A549 (cell line): ENCODE measurements at regions of chr22 and their contacts with region 1.

Region 1: GRCh38 chr22:43993027-43993760 is 30.9 kb upstream of the PARVB start:
- DNase-seq: peak; percentile 43 to 45
- ATAC-seq: peak; percentile 83 to 92; a peak in 5 of 6 replicates
- H3K4me3 ChIP-seq: no peak overlapping the region
- H3K27ac ChIP-seq: no peak overlapping the region
- H3K4me1 ChIP-seq: no peaks in the 10 kb centered on the region
- CTCF ChIP-seq: peak; percentile 84
- EP300 ChIP-seq: no peak
- POLR2A ChIP-seq: no peak
- RAD21 ChIP-seq: peak; percentile 82 to 85

Region 2: GRCh38 chr22:43945632-43946383 is 47.4 kb before region 1 on chr22:
- CTCF ChIA-PET with region 1: no interaction called
- POLR2A ChIA-PET with region 1: no interaction called
- DNase-seq: peak; percentile 69 to 72
- ATAC-seq: peak; percentile 99 to 100
- H3K4me3 ChIP-seq: no peak overlapping the region
- H3K27ac ChIP-seq: no peak overlapping the region
- H3K4me1 ChIP-seq: no peaks in the 10 kb centered on the region
- CTCF ChIP-seq: peak; percentile 59
- EP300 ChIP-seq: no peak
- POLR2A ChIP-seq: no peak
- RAD21 ChIP-seq: peak; percentile 34 to 38; a peak in 4 of 5 replicates

Region 3: DNA sequence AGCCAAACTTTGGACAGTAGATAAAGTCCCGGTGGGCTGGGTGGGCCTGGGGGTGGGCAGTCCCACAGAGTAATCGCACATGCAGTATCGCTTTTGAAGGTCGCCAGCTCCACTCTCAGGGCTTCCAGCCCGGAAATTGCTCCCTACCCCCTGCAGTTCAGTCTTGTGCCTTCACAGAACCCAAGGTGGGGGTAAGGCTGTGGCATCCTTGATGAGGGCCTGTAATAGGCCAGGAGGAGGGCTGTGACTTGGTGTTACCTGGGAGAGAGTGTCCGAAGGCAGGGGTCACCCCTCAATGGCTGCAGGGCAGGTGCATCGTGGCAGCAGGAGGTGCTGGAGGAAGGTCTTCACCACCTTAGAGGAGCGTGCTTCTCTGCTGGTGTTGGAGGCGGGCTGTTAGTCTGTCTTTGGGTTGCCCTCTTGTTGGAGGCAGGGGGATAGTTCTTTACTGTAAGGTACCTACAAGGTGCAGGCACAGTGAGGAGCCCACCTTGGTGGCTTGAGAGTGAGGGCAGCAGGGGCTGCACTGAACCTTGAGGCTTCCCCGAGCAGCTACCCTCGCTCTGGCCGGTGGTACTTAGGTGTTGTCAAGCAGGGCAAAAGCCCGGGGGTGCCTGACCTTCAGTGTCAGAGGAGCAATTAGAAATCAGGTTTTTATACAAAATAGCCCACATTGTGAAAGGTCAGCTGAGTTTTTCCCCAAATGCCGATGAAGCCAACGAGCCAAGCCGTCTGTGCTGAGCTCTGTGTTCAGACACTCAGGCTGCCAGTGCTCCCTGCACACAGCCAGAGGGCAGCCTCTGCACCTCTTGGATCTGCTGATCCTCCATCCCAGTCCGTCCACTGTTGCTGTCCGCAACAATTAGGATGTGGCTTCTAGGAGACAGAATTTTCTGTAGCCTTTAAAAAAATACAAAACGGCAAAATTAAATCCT is 16.1 kb before region 1 on chr22:
- CTCF ChIA-PET with region 1: interaction called, 16 read pairs
- POLR2A ChIA-PET with region 1: no interaction called
- DNase-seq: no peak
- ATAC-seq: no peak
- H3K4me3 ChIP-seq: no peak overlapping the region
- H3K27ac ChIP-seq: no peak overlapping the region
- H3K4me1 ChIP-seq: no peaks in the 10 kb centered on the region
- CTCF ChIP-seq: no peak
- EP300 ChIP-seq: no peak
- POLR2A ChIP-seq: no peak
- RAD21 ChIP-seq: no peak

Region 4: DNA sequence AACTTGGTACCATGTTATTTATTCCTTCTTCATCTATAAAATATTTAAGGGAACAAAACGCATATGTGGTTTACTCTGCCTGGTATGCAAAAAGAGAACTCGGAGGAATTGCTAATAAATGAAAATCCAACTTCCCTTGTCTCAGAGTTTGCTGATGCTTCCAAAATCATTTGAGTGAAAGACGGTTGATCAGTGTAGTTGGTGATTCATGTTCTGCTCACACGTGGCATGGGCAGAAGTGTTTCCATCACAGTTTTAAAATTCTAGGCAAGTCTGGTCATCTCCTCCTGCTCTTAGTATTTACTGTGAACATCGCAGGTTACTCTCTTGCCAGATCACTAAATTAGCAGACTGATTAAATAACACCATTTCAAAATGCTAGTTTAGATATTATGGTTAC is 19.0 kb after region 1 on chr22:
- CTCF ChIA-PET with region 1: interaction called, 24 read pairs
- POLR2A ChIA-PET with region 1: no interaction called
- DNase-seq: no peak
- ATAC-seq: no peak
- H3K4me3 ChIP-seq: no peak overlapping the region
- H3K27ac ChIP-seq: no peak overlapping the region
- H3K4me1 ChIP-seq: no peaks in the 10 kb centered on the region
- CTCF ChIP-seq: no peak
- EP300 ChIP-seq: no peak
- POLR2A ChIP-seq: no peak
- RAD21 ChIP-seq: no peak

Region 5: GRCh38 chr22:44063462-44064371 is 70.5 kb after region 1 on chr22:
- CTCF ChIA-PET with region 1: interaction called, 10 read pairs
- POLR2A ChIA-PET with region 1: no interaction called
- DNase-seq: no peak
- ATAC-seq: no peak
- H3K4me3 ChIP-seq: no peak overlapping the region
- H3K27ac ChIP-seq: no peak overlapping the region
- H3K4me1 ChIP-seq: peaks cover 11% of the 10 kb centered on the region
- CTCF ChIP-seq: no peak
- EP300 ChIP-seq: no peak
- POLR2A ChIP-seq: no peak
- RAD21 ChIP-seq: no peak

Region 6: DNA sequence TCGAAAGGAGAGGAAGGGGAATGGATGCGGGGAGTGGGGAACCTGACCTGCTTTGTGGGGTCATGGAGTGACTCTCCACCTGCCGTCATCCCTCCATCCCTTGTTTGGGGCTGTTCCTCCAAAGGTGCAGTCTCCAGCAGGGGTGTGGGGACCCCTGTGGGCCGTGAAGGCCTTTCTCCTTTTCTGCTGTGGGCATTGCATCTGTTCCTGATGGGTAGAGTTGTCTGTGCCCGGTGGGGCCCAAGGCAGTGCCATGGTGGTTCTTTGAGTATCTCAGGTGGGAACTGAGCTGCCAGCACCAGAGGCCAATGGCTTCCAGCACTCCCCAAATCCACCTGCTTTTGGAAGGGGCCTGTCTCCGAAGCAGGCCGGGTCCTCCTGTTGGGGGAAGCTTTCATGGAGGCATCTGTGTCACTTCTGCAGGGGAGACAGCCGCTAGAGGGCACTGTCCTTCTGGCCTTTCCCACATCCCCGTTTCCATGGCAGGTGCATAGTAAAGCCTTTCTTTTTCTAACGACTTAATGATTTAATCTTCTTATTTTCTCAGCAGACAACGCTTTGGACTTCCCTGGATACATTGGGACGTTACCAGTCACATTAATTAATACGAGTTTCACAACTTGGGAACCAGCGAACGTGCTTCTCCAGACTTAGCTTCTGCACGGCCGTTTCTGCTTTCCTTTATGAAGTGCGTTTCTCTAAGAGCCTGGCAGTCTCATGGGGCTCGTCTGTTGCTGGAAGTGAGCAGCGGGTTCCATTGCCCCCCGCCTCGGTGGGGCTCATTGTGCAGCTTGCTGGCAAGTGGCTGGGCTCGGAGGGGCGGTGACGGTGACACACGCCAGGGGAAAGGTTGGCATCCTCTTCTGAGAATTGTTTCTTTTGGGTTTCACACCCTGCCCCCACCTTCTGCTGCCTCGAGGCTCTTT is 88.0 kb after region 1 on chr22:
- CTCF ChIA-PET with region 1: interaction called, 147 read pairs
- POLR2A ChIA-PET with region 1: interaction called, 5 read pairs
- DNase-seq: peak; percentile 54 to 73
- ATAC-seq: peak in 1 of 2 experiments; percentile 85; a peak in 3 of 6 replicates
- H3K4me3 ChIP-seq: no peak overlapping the region
- H3K27ac ChIP-seq: no peak overlapping the region
- H3K4me1 ChIP-seq: no peaks in the 10 kb centered on the region
- CTCF ChIP-seq: peak; percentile 68
- EP300 ChIP-seq: no peak
- POLR2A ChIP-seq: no peak
- RAD21 ChIP-seq: peak; percentile 62 to 70

Region 7: DNA sequence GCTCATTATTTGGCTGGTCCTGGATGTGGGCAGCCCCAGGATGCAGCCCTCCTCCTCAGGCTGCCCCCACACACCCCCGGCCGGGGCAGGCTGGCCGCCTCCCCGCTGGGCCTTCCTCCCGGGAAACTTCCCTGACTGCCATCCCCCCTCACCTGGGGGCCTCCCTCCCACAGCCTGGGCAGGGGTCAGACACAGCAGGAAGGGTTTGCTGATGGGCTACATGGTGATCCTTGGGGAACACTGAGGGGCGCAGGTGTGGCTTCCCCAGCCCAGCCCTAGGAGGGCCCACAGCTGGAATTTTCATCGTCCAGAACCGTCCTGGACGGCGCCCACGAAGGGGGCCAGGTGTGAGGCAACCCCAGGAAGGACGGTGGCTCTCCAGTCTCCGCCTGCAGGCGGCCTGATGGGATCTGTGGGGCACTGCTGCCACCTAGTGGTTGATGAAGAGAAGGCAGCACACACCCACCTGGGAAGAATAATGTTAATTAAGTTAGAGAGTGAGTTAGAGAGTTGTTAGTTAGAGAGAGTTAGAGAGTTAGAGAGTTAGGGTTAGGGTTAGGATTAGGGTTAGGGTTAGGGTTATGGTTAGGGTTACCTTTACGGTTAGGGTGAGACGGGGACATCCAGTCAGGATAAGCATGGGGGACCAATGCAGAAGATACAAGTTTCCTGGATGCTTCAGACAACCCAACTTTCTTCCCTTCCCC is 632.9 kb after region 1 on chr22:
- CTCF ChIA-PET with region 1: interaction called, 166 read pairs
- POLR2A ChIA-PET with region 1: interaction called, 5 read pairs
- DNase-seq: peak; percentile 46 to 55
- ATAC-seq: peak; percentile 65 to 77
- H3K4me3 ChIP-seq: no peak overlapping the region
- H3K27ac ChIP-seq: peak overlapping the region in 1 of 2 experiments; percentile 64; a peak in 3 of 6 replicates
- H3K4me1 ChIP-seq: peaks cover 5% of the 10 kb centered on the region; the same call in 1 of the 3 replicates
- CTCF ChIP-seq: peak; percentile 82
- EP300 ChIP-seq: no peak
- POLR2A ChIP-seq: no peak
- RAD21 ChIP-seq: peak; percentile 94 to 96